PC-9 (cell line): ENCODE measurements at regions of chr2 and their contacts with region 1.

Region 1: GRCh38 chr2:233832869-233833311 is 21.4 kb downstream of the HJURP start:
- DNase-seq: peak; percentile 77 to 83
- H3K4me3 ChIP-seq: no peak overlapping the region
- H3K27ac ChIP-seq: no peak overlapping the region
- H3K4me1 ChIP-seq: no peaks in the 10 kb centered on the region
- H3K27me3 ChIP-seq: no peaks in the 10 kb centered on the region
- CTCF ChIP-seq: peak; percentile 74

Region 2: GRCh38 chr2:233280114-233280693 is 552.7 kb before region 1 on chr2:
- CTCF ChIA-PET with region 1: no interaction called
- POLR2A ChIA-PET with region 1: no interaction called
- intact Hi-C with region 1: loop called (anchors 5 kb)
- DNase-seq: peak; percentile 28 to 49
- H3K4me3 ChIP-seq: no peak overlapping the region
- H3K27ac ChIP-seq: peak overlapping the region; percentile 7; the same call in 1 of the 2 replicates
- H3K4me1 ChIP-seq: peaks cover 12% of the 10 kb centered on the region; the same call in 1 of the 2 replicates
- H3K27me3 ChIP-seq: no peaks in the 10 kb centered on the region
- CTCF ChIP-seq: no peak

Region 3: DNA sequence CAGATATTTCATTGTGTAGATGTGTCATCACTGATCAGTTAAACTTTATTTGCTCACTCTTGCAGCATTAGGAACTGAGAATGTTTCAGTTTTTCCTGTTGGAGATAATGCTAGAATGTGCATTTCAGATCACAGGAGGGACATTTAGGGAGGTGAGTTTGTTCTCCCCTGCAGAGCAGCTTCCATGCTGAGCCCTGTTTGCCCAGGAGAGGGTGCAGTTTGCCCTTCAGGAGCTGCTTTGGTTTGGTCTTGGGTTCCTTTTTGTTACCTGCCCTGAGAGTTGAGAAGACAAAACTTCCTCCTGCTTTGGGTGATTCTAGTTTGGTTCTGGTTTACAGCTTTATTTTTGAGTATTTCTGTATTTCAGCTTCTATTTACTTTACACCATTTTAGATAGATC is 428.7 kb before region 1 on chr2:
- CTCF ChIA-PET with region 1: interaction called, 3 read pairs
- POLR2A ChIA-PET with region 1: no interaction called
- intact Hi-C with region 1: loop called (anchors 2 kb)
- DNase-seq: peak; percentile 62 to 68
- H3K4me3 ChIP-seq: no peak overlapping the region
- H3K27ac ChIP-seq: no peak overlapping the region
- H3K4me1 ChIP-seq: no peaks in the 10 kb centered on the region
- H3K27me3 ChIP-seq: no peaks in the 10 kb centered on the region
- CTCF ChIP-seq: peak; percentile 84

Region 4: DNA sequence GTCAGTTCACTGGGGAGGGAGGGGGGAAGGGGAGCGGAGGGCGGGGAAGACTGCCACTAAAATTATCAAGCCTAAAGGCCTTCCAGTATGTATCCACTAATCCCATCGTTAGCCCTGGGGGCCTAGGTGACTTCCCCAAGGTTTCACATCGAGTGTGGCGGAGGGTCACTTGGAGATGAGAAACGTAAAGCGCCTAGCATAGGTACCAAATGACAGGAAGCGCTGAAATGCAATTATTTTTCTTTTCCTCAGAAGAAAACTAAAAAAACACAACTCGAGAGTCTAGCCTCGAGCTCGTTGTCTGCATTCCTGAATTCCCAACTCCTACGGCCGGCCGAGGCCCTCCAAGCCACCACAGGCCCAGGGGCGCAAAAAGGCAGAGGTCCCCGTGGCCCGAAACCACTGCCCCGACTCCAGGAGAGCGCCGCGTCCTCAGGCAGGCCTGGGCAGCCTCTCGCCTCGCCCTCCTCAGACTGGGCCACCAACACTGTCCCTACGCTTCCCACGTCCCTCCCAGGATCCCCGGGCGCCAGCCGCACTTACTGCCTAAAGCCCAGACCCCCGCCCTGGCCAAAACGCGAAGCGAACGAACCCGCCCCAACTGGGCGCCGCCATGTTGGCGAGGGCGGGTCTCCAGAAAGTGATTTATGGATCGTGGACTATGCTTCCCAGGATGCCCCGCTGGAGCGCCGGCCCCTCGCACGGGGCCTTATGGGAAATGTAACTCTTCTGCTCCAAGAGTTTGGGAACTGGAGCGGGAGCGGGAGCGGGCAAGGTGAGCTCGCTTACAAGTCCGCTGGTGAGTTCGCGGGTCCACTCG is 266.5 kb before region 1 on chr2 and contains the start of gene USP40:
- CTCF ChIA-PET with region 1: no interaction called
- POLR2A ChIA-PET with region 1: no interaction called
- intact Hi-C with region 1: loop called (anchors 5 kb)
- DNase-seq: peak; percentile 89 to 93
- H3K4me3 ChIP-seq: peak within 1 kb of the TSS; percentile 91
- H3K27ac ChIP-seq: peak within 1 kb of the TSS; percentile 88
- H3K4me1 ChIP-seq: peaks cover 18% of the 10 kb centered on the region
- H3K27me3 ChIP-seq: no peaks in the 10 kb centered on the region
- CTCF ChIP-seq: no peak
- total RNA-seq, gene USP40: 116 and 127 TPM in 2 replicates

Region 5: DNA sequence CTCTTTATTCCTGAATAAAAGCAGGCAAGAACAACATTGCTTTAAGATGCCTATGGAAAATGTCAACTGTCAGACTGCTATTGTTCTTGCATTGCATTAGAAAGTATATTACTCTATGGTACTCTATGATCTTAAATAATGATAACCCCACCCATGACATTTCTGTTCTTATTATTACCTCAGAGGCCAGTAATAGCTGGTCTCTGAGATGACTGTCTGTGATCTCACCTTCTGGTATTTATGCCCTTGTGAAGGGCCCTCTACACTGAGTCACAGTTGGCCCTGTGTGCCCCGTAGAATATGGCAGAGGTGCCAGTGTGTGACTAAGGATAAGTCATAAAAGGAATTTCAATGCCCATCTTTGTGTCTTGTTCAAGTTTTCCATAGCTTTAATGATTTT is 278.6 kb after region 1 on chr2:
- CTCF ChIA-PET with region 1: interaction called, 11 read pairs
- POLR2A ChIA-PET with region 1: no interaction called
- intact Hi-C with region 1: no loop called
- DNase-seq: peak; percentile 59 to 89
- H3K4me3 ChIP-seq: no peak overlapping the region
- H3K27ac ChIP-seq: no peak overlapping the region
- H3K4me1 ChIP-seq: peaks cover 17% of the 10 kb centered on the region
- H3K27me3 ChIP-seq: no peaks in the 10 kb centered on the region
- CTCF ChIP-seq: no peak

Region 6: GRCh38 chr2:234395891-234396420 is 563.1 kb after region 1 on chr2:
- CTCF ChIA-PET with region 1: no interaction called
- POLR2A ChIA-PET with region 1: no interaction called
- intact Hi-C with region 1: no loop called
- DNase-seq: no peak
- H3K4me3 ChIP-seq: no peak overlapping the region
- H3K27ac ChIP-seq: no peak overlapping the region
- H3K4me1 ChIP-seq: no peaks in the 10 kb centered on the region
- H3K27me3 ChIP-seq: no peaks in the 10 kb centered on the region
- CTCF ChIP-seq: no peak